T-cell (primary cell): ENCODE measurements at regions of chr15 and their contacts with region 1.

Region 1: GRCh38 chr15:29139540-29140459 is 129.8 kb downstream of the NSMCE3 start:
- DNase-seq: peak in 31 of 35 experiments; percentile 17 to 64 (median 42)
- ATAC-seq: peak; percentile 69 to 79 (median 72)
- H3K4me3 ChIP-seq: no peak overlapping the region
- H3K4me3 Mint-ChIP-seq: peak overlapping the region in 2 of 3 donors; percentile 42 to 50
- H3K27ac ChIP-seq: no peak overlapping the region
- H3K27ac Mint-ChIP-seq: no peak overlapping the region
- H3K4me1 ChIP-seq: peaks cover 0 to 9% of the 10 kb centered on the region in 2 experiments
- H3K4me1 Mint-ChIP-seq: peaks cover 8 to 16% (median 9%) of the 10 kb centered on the region in 3 donors
- H3K27me3 ChIP-seq: peaks cover 2 to 71% of the 10 kb centered on the region in 2 experiments
- H3K27me3 Mint-ChIP-seq: peaks cover 51 to 56% of the 10 kb centered on the region in 2 donors

Region 2: GRCh38 chr15:29115093-29115991 is 24.5 kb before region 1 on chr15:
- CTCF ChIA-PET with region 1: interaction called in 1 of 2 experiments, 10 read pairs
- POLR2A ChIA-PET with region 1: no interaction called
- DNase-seq: peak in 7 of 35 experiments; percentile 14 to 33 (median 23)
- ATAC-seq: peak in 3 of 4 experiments; percentile 21 to 49 (median 48)
- H3K4me3 ChIP-seq: peak overlapping the region; percentile 10 to 72
- H3K4me3 Mint-ChIP-seq: peak overlapping the region; percentile 21 to 76 (median 50)
- H3K27ac ChIP-seq: no peak overlapping the region
- H3K27ac Mint-ChIP-seq: no peak overlapping the region
- H3K4me1 ChIP-seq: peaks cover 2 to 16% of the 10 kb centered on the region in 2 experiments
- H3K4me1 Mint-ChIP-seq: peaks cover 12 to 19% (median 15%) of the 10 kb centered on the region in 3 donors
- H3K27me3 ChIP-seq: peaks cover 0 to 6% of the 10 kb centered on the region in 2 experiments
- H3K27me3 Mint-ChIP-seq: peaks cover 0 to 5% of the 10 kb centered on the region in 2 donors